Heart right ventricle (tissue), 16 donors: ENCODE measurements at regions of chr3 and their contacts with region 1.

Region 1: DNA sequence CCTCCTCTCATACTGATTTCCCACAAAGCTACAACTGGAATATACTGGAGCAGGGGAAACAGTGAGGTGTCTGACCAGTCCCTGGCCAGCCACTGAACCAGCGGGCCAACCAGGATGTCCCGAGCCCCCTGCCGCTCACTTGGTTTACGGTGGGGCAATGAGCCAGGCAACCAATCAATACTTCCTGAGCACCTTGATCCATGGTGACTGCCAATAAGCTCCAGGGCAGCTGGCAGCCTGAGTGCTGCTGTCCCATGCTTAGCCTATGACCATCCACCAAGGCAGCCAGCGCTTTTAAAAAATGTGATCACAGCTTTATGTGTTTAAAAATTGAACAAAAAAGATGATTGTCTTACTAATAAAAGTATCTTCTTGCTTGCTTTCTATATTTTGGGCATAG is 4.2 kb downstream of the SCN10A start:
- DNase-seq: no peak
- ATAC-seq: no peak
- H3K4me3 ChIP-seq: no peak overlapping the region
- H3K27ac ChIP-seq: no peak overlapping the region
- H3K4me1 ChIP-seq: no peaks in the 10 kb centered on the region
- H3K27me3 ChIP-seq: peaks cover 0 to 7% (median 0%) of the 10 kb centered on the region in 7 donors
- CTCF ChIP-seq: no peak

Region 2: GRCh38 chr3:38755130-38755529 is 56.7 kb before region 1 on chr3:
- intact Hi-C with region 1: loop called in 1 of 10 experiments (anchors 2 kb)
- DNase-seq: no peak
- ATAC-seq: no peak
- H3K4me3 ChIP-seq: no peak overlapping the region
- H3K27ac ChIP-seq: no peak overlapping the region
- H3K4me1 ChIP-seq: no peaks in the 10 kb centered on the region
- H3K27me3 ChIP-seq: peaks cover 0 to 10% (median 0%) of the 10 kb centered on the region in 7 donors
- CTCF ChIP-seq: no peak